RWPE1 (cell line): ENCODE measurements at regions of chr10 and their contacts with region 1.

Region 1: GRCh38 chr10:23314835-23315239 is 29.8 kb downstream of the C10orf67 start:
- DNase-seq: peak; percentile 56
- H3K27ac ChIP-seq: no peak overlapping the region
- CTCF ChIP-seq: peak; percentile 67

Region 2: GRCh38 chr10:23230582-23230981 is 84.3 kb before region 1 on chr10:
- CTCF ChIA-PET with region 1: no interaction called
- POLR2A ChIA-PET with region 1: no interaction called
- DNase-seq: no peak
- H3K27ac ChIP-seq: no peak overlapping the region
- CTCF ChIP-seq: no peak

Region 3: DNA sequence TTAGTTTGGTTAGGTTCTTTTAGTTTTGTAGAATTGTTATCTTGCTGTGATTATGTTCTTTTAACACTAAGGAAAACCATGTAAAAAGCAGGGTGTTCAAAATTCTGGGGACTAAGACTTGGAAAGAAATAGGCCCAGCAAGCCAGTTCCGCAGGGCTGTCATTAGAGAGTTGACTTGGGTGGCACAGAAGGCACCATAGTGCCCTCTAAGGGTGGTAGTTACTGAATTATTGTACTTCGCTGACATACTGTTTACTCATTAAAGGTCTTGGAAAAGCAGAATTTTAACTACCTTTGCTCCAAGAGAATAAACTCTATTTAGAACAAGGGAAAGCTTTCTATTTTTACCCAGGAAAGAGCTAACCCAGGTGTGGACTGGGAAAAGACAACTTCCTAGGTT is 210.6 kb after region 1 on chr10:
- CTCF ChIA-PET with region 1: interaction called, 13 read pairs
- POLR2A ChIA-PET with region 1: no interaction called
- DNase-seq: peak; percentile 34
- H3K27ac ChIP-seq: no peak overlapping the region
- CTCF ChIP-seq: peak; percentile 30